Heart right ventricle (tissue), 16 donors: ENCODE measurements at regions of chr9 and their contacts with region 1.

Region 1: DNA sequence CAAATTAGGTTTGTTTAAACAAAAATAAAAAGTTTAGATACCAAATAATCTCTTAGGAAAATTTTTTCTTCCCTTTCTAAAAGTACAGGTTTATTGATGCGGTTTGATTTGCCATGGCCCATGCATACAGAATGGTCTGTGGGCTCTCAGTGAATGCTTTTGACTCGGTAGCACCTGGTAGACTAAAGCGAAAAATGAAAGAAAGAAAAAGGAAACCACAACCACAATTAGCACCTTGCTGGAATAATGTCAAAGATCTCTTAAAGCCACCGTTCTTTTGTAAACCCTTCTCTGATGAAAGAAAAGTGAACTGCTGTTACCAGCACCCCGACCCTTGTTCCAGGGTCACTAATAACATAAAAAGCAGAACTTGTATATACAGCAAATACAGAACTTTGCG is 157.9 kb downstream of the NFIB start:
- DNase-seq: no peak
- ATAC-seq: no peak
- H3K4me3 ChIP-seq: no peak overlapping the region
- H3K27ac ChIP-seq: peak overlapping the region in 6 of 10 donors; percentile 2 to 41 (median 8)
- H3K4me1 ChIP-seq: peaks cover 3 to 100% (median 68%) of the 10 kb centered on the region in 9 donors
- H3K27me3 ChIP-seq: no peaks in the 10 kb centered on the region
- CTCF ChIP-seq: no peak

Region 2: DNA sequence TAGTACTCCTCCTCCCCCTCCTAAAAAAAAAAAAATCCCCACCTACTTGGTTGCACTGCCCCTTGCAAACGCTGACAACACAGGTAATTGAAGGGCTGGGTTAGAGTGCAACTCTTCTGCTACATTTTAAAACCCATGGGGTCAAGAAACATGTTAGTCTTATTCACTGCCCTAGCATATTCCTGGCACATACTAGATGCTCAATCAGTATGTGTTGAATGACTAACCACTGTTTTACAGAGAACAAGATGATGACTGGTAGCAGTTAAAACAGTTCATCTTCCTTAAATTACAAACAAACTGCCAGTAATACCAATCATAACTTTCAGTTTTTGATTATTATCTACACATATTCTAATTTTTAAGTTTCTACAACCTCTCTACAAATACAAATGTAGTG is 33.5 kb after region 1 on chr9:
- intact Hi-C with region 1: loop called in 1 of 10 experiments (anchors 5 kb)
- DNase-seq: no peak
- ATAC-seq: no peak
- H3K4me3 ChIP-seq: no peak overlapping the region
- H3K27ac ChIP-seq: no peak overlapping the region
- H3K4me1 ChIP-seq: peaks cover 4 to 87% (median 79%) of the 10 kb centered on the region in 9 donors
- H3K27me3 ChIP-seq: no peaks in the 10 kb centered on the region
- CTCF ChIP-seq: no peak

Region 3: GRCh38 chr9:14198841-14199455 is 42.9 kb after region 1 on chr9:
- intact Hi-C with region 1: loop called in 1 of 10 experiments (anchors 5 kb)
- DNase-seq: peak; percentile 63 to 75
- ATAC-seq: peak; percentile 72 to 91 (median 87)
- H3K4me3 ChIP-seq: peak overlapping the region in 4 of 10 donors; percentile 4 to 8 (median 7)
- H3K27ac ChIP-seq: peak overlapping the region; percentile 10 to 85 (median 71)
- H3K4me1 ChIP-seq: peaks cover 8 to 100% (median 82%) of the 10 kb centered on the region in 9 donors
- H3K27me3 ChIP-seq: no peaks in the 10 kb centered on the region
- CTCF ChIP-seq: no peak

Region 4: DNA sequence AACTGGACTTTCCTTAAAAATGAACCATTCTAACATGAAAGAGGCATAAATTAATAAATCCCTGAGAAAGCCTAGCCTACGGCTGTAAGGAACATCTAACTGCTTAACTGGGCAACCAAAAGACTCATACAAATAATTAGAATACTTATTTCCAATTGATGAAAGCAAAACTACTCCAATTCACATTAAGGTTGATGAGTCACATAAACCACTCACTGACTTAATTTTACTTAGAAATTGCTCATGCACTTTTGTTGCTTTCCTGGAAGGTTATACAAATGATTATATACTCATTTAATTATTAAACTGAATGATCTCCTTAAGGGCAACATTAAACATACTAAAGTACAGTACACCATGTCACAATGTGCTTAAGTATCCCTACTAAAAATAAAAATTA is 56.0 kb after region 1 on chr9:
- intact Hi-C with region 1: loop called in 1 of 10 experiments (anchors 10 kb)
- DNase-seq: no peak
- ATAC-seq: no peak
- H3K4me3 ChIP-seq: no peak overlapping the region
- H3K27ac ChIP-seq: peak overlapping the region in 5 of 10 donors; percentile 6 to 60 (median 10)
- H3K4me1 ChIP-seq: peaks cover 5 to 93% (median 67%) of the 10 kb centered on the region in 9 donors
- H3K27me3 ChIP-seq: no peaks in the 10 kb centered on the region
- CTCF ChIP-seq: no peak